ENCODE measurements at regions of chr6 and their contacts with region 1.

Region 1: GRCh38 chr6:3977875-3978711 is 100.8 kb downstream of the FAM217A start:
- DNase-seq: peak; percentile 34 to 86
- ATAC-seq: peak; percentile 97 to 99
- H3K4me3 ChIP-seq: no peak overlapping the region
- H3K27ac ChIP-seq: no peak overlapping the region
- H3K4me1 ChIP-seq: peaks cover 9% of the 10 kb centered on the region; the same call in 2 of the 3 replicates
- CTCF ChIP-seq: peak; percentile 73
- EP300 ChIP-seq: no peak
- POLR2A ChIP-seq: no peak
- RAD21 ChIP-seq: peak; percentile 69 to 76

Region 2: GRCh38 chr6:3887150-3887700 is 90.9 kb before region 1 on chr6:
- CTCF ChIA-PET with region 1: interaction called, 12 read pairs
- POLR2A ChIA-PET with region 1: no interaction called
- DNase-seq: peak in 1 of 2 experiments; percentile 23
- ATAC-seq: peak in 1 of 2 experiments; percentile 10; a peak in 2 of 6 replicates
- H3K4me3 ChIP-seq: no peak overlapping the region
- H3K27ac ChIP-seq: peak overlapping the region; percentile 74 to 86
- H3K4me1 ChIP-seq: peaks cover 54% of the 10 kb centered on the region
- CTCF ChIP-seq: peak; percentile 49
- EP300 ChIP-seq: no peak
- POLR2A ChIP-seq: no peak
- RAD21 ChIP-seq: peak; percentile 61 to 66

Region 3: GRCh38 chr6:3948866-3949265 is 29.2 kb before region 1 on chr6:
- CTCF ChIA-PET with region 1: interaction called, 11 read pairs
- POLR2A ChIA-PET with region 1: no interaction called
- DNase-seq: no peak
- ATAC-seq: no peak
- H3K4me3 ChIP-seq: no peak overlapping the region
- H3K27ac ChIP-seq: no peak overlapping the region
- H3K4me1 ChIP-seq: peaks cover 11% of the 10 kb centered on the region
- CTCF ChIP-seq: no peak
- EP300 ChIP-seq: no peak
- POLR2A ChIP-seq: no peak
- RAD21 ChIP-seq: no peak

Region 4: DNA sequence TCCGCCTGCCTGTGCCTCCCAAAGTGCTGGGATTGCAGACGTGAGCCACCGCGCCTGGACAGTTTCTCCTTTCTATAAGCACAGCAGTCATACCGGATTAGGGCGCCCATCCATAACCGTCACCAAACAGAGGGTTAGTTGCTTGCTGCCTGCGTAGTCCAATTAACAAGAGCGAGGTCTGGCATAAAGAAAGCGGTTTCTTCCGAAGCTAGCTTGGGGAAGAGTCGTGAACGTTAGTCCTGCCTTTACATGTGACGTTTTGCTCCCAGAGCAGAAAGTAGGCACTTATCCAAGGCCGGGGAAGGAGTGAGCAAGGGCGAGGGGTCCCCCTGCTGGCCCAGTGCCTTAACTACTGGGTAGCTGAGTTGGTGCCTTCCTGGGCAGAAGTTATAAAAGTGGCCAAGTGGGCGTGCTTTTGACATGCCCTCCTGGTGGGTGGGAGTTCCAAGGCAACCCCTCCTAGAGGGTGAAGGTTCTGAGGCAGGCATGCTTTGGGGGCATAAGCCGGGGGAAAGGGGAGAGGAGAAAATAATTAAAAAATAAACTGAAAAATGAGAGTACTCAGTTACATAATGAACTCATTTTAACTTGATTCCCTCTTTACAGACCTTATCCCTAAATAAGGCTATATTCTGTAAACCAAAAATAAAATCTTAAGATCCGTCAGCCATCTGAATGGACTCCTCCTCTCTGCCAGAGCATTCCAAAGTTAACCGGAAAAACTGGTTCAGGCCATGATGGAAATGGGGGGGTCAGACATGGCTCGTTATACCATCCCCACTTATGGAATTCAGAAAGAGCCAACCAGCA is 12.8 kb after region 1 on chr6:
- CTCF ChIA-PET with region 1: interaction called, 42 read pairs
- POLR2A ChIA-PET with region 1: no interaction called
- DNase-seq: peak; percentile 55 to 80
- ATAC-seq: peak; percentile 97 to 98
- H3K4me3 ChIP-seq: no peak overlapping the region
- H3K27ac ChIP-seq: peak overlapping the region; percentile 34 to 69; a peak in 4 of 6 replicates
- H3K4me1 ChIP-seq: peaks cover 19% of the 10 kb centered on the region; the same call in 2 of the 3 replicates
- CTCF ChIP-seq: peak; percentile 65
- EP300 ChIP-seq: no peak
- POLR2A ChIP-seq: no peak
- RAD21 ChIP-seq: peak; percentile 84 to 90

Region 5: GRCh38 chr6:4008324-4009047 is 30.4 kb after region 1 on chr6:
- CTCF ChIA-PET with region 1: interaction called, 13 read pairs
- POLR2A ChIA-PET with region 1: no interaction called
- DNase-seq: peak; percentile 43 to 85
- ATAC-seq: peak; percentile 87
- H3K4me3 ChIP-seq: no peak overlapping the region
- H3K27ac ChIP-seq: peak overlapping the region; percentile 67 to 83
- H3K4me1 ChIP-seq: peaks cover 39% of the 10 kb centered on the region
- CTCF ChIP-seq: peak; percentile 63
- EP300 ChIP-seq: 0 out of 5 replicates have a peak, but pooled peaks of 1 of the 2 experiments have one; percentile 36
- POLR2A ChIP-seq: no peak
- RAD21 ChIP-seq: peak; percentile 69 to 74